ENCODE measurements at regions of chr10 and their contacts with region 1.

Region 1: DNA sequence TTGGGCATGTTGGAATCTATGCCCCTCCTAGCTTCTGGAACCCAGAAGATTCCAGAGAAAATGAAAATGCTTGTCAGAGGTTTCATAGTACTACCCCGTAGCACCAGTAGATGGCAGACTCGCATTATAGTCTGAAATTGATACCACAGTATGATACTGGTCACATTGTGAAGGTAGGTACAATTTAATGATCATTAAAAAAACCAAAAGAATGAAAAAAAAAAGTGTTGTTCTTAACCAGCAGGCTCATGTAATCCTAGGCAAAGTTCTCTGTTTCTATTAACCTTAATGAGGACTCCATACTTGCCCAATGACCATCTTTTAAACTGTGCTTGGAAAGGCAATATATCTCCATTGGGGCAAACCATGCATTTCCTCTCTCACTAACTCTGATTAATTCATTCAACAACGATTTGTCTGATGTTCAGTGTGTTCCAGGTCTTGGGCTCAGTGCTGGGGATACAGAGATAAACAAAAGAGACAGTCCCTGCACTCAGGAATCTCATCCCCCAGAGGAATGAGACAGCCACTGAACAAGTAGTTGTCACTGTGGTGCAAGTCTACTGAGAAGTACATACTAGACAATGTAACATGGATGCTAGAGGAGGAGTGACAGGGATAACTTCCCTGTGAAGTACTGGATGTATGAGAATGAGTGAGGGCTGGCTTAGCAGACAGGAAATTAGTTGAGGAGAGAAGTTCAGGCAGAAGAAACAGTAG is 223.5 kb upstream of the PHYHIPL start:
- DNase-seq: peak in 3 of 10 donors; percentile 45 to 61 (median 46)

Region 2: DNA sequence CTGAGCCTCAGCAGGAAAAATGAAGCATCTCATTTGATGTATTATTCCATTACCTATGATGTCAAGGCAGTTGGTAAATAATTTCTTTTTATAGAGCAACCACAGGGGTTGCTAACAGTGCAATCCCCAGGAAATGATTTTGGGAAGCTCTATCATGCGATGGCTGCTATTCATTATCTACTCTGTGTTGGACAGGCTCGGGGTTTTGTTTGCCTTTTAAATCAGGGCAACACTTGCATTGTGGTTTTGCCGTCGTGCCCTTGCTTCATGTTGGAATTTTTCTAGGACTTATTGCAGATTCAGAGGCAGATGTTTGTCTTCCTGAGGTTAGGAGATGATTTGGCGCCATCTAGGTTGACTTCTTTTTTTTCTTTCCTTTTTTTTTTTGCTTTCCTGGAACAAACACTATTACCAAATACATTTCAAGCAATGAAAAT is 311.8 kb before region 1 on chr10:
- intact Hi-C with region 1: no loop called
- DNase-seq: no peak

Region 3: GRCh38 chr10:58781873-58782488 is 170.9 kb before region 1 on chr10:
- intact Hi-C with region 1: loop called (anchors 5 kb)
- DNase-seq: no peak

Region 4: GRCh38 chr10:58851606-58852005 is 101.3 kb before region 1 on chr10:
- intact Hi-C with region 1: no loop called
- DNase-seq: no peak

Region 5: DNA sequence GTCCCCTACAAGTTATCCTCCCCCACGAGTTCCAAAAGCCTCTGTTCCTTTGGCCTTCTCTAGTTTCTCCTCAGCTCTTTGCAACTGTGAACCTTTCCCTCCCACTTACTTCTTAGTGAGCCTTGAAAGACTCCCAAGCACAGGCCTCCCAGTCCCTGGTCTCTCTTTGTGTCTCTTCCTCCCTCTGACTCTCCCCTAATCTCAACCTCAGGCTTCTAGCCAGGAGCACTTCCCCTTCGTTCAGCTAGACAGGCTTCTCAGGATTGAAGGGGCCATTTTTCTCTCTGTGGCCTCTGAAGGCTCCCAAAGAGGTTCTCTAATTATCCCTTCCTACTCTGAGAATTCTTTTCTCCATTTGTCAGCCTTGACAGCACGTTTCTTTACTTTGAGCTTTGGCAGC is 173.4 kb after region 1 on chr10:
- intact Hi-C with region 1: loop called (anchors 2 kb)
- DNase-seq: no peak

Region 6: DNA sequence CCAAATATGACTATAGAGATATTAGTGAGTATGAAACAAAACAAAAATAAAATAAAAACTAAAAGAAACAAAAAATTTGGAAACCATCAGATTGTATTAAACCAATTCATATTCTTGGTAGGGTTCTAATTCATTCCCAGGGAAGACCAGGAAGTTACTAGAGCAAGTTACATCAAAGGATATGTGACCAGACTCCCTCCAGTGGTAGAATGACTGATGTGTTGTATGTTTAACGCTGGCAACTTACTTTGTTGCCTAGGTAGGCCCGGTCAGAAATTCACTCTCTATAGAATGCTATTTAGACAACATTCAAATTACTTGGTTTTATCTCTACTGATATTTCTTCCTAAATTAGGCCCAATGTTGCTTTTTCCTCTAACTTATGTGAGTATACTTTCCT is 228.8 kb after region 1 on chr10:
- intact Hi-C with region 1: loop called (anchors 2 kb)
- DNase-seq: peak in 2 of 10 donors; percentile 10 to 25

Region 7: GRCh38 chr10:59234816-59235429 is 282.0 kb after region 1 on chr10:
- intact Hi-C with region 1: loop called (anchors 2 kb)
- DNase-seq: peak in 1 of 10 donors; percentile 26

Measured in posterior cingulate gyrus (tissue), 11 donors.